AG04449 (cell line): ENCODE measurements at regions of chr21 and their contacts with region 1.

Region 1: GRCh38 chr21:32597205-32597604 is 11.9 kb upstream of the TCP10L start:
- DNase-seq: peak; percentile 36
- H3K4me3 ChIP-seq: no peak overlapping the region
- CTCF ChIP-seq: no peak

Region 2: GRCh38 chr21:32096411-32096810 is 500.8 kb before region 1 on chr21:
- CTCF ChIA-PET with region 1: no interaction called
- POLR2A ChIA-PET with region 1: no interaction called
- DNase-seq: no peak
- H3K4me3 ChIP-seq: no peak overlapping the region
- CTCF ChIP-seq: no peak

Region 3: DNA sequence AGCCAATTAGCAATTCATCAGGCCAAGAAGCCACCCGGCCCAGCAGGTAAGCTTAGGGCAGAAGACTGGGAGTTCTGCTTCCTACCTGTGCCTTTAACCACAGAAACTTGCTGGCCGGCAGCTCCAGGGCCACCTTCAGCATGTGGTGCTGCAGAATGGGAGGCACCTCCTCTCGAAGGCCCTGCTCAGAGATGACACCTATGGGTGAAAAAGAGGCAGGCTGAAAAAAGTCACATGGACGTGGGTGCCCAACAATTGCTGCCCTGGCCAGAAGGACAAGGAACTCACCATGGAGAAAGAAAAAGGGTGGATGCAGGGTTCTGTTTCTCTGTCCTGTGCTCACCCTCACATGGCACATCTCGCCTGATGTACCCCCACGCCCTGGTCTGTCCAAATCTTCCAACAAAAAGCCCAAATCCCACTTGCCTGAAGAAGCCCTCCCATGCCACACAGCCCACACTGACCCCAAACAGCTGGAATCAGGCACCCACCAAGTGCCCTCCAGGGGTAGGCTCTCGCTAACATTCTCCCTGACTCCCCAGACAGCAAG is 237.4 kb before region 1 on chr21:
- CTCF ChIA-PET with region 1: interaction called, 52 read pairs
- POLR2A ChIA-PET with region 1: no interaction called
- DNase-seq: no peak
- H3K4me3 ChIP-seq: no peak overlapping the region
- CTCF ChIP-seq: no peak

Region 4: DNA sequence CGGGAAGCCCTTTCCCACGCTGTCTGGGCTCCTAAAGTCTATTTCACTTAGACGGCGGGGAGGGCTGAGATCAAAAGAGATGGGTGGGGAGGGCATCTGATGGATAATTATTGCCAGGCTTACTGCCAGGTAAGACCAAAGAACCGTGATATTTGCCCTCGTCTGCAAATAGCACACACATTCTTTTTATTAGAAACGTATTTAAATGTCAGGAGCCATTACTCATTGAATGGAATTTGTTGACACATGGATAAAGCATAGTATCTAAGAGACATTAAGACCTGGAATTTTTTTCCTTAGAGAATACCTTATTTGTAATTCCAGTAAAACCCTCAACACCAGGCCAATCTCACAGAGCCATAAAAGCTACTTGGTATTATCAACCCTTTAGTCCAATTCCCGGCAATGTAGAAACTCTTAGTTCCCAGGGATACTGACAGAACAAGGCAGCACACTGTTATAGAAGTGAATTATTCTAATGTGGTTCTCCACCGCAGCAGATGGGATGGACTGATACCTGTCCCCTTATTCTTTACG is 215.0 kb before region 1 on chr21:
- CTCF ChIA-PET with region 1: interaction called, 38 read pairs
- POLR2A ChIA-PET with region 1: interaction called, 6 read pairs
- DNase-seq: peak; percentile 41
- H3K4me3 ChIP-seq: no peak overlapping the region
- CTCF ChIP-seq: no peak

Region 5: DNA sequence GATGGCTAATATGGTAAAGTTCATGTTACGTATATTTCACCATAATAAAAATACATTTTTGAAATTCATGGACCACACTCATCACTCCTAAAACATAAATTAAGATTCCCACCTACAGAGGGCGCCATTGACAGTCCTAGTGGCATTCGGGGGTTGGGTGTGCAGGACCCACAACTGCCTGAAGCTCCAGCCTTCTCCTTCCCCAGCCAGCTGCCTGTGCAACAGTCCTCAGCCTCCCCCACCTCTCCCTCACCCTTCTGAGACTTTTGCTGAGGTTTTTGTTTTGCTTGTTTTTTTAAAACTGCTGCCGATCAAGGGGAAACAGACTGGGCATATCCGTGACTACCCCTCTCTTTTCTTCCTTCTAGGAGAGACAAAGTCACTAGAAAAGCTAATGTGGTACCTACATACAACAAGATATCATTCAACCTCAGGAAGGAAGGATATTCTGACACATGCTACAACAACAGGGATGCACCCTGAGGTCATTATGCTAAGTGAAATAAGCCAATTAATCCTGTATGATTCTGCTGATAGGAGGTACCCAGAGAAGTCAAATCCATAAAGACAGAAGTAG is 193.9 kb before region 1 on chr21:
- CTCF ChIA-PET with region 1: interaction called, 215 read pairs
- POLR2A ChIA-PET with region 1: interaction called, 3 read pairs
- DNase-seq: no peak
- H3K4me3 ChIP-seq: no peak overlapping the region; the same call in 1 of the 2 replicates
- CTCF ChIP-seq: peak; percentile 57

Region 6: GRCh38 chr21:32545948-32546441 is 51.2 kb before region 1 on chr21:
- CTCF ChIA-PET with region 1: no interaction called
- POLR2A ChIA-PET with region 1: no interaction called
- DNase-seq: no peak
- H3K4me3 ChIP-seq: no peak overlapping the region
- CTCF ChIP-seq: no peak

Region 7: GRCh38 chr21:32569261-32570230 is 27.7 kb before region 1 on chr21:
- CTCF ChIA-PET with region 1: interaction called, 53 read pairs
- POLR2A ChIA-PET with region 1: no interaction called
- DNase-seq: no peak
- H3K4me3 ChIP-seq: peak overlapping the region; percentile 66
- CTCF ChIP-seq: peak; percentile 86

Region 8: DNA sequence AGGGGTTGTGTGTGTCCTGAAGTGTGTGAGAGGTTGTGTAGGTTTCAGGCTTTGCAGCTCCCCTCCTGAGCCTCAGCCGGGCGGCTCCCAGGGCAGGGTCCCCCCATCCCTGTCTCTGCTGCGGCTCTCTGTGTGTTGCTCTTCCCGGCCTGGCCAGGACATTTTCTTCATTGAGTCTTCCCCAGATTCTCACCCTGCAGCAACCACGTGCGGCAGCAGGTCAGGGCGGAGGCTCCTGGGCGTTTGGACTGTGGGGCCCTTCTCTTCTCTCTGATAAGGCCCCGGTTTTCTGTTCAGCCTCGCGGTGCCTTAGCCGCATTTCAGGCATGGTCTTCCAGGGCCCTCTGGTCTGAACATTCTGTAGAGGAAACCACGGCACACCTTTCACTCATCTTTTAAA is 10.1 kb before region 1 on chr21:
- CTCF ChIA-PET with region 1: interaction called, 36 read pairs
- POLR2A ChIA-PET with region 1: no interaction called
- DNase-seq: no peak
- H3K4me3 ChIP-seq: no peak overlapping the region
- CTCF ChIP-seq: no peak

Region 9: DNA sequence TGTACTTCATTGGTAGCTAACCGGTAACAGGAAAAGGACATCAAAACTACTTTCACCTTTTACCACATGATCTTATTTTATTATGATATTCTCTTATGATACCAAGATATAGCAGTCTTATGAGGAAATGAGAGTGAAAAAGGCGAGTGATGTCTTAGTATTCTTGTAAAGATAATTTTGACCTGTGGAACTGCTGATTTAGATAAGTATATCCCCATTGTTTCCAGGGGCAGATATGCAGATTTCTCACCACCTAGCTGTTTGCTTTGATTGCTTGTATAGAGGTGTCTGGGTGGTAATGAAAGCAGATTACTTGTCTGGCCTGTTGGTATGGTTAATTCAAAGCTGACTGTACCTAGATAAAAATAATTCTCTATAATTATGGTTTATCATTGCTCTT is 77.5 kb after region 1 on chr21:
- CTCF ChIA-PET with region 1: no interaction called
- POLR2A ChIA-PET with region 1: no interaction called
- DNase-seq: no peak
- H3K4me3 ChIP-seq: no peak overlapping the region
- CTCF ChIP-seq: no peak